B cell (primary cell): ENCODE measurements at regions of chr21 and their contacts with region 1.

Region 1: GRCh38 chr21:37463083-37463801 is 96.7 kb downstream of the DYRK1A start:
- DNase-seq: peak; percentile 68
- ATAC-seq: peak; percentile 72
- H3K4me3 ChIP-seq: no peak overlapping the region
- H3K4me3 Mint-ChIP-seq: peak overlapping the region; percentile 33
- H3K27ac ChIP-seq: no peak overlapping the region
- H3K27ac Mint-ChIP-seq: peak overlapping the region; percentile 69
- H3K4me1 ChIP-seq: peaks cover 52 to 64% of the 10 kb centered on the region in 2 donors
- H3K4me1 Mint-ChIP-seq: peaks cover 86% of the 10 kb centered on the region
- H3K27me3 ChIP-seq: no peaks in the 10 kb centered on the region
- H3K27me3 Mint-ChIP-seq: no peaks in the 10 kb centered on the region
- CTCF ChIP-seq: peak; percentile 66

Region 2: DNA sequence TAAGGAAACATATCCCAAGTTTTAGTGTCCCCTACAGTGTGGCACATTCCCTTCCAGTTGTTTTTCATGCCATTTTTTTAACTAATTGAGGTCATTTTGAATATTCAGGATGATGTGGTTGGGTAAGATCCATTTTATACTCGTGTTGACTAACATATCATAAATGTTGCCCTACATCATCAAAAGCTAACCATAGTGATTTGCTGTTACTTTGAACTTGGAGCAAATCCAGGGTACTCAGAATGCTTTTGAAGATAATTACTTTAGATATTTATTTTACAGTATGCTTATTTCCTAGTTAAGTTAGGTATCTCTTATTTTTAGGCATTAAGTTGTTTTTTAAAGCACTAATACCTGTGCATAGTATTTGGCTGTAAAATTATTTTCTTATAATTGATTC is 38.8 kb before region 1 on chr21:
- CTCF ChIA-PET with region 1: no interaction called
- POLR2A ChIA-PET with region 1: no interaction called
- intact Hi-C with region 1: loop called (anchors 5 kb)
- DNase-seq: no peak
- ATAC-seq: no peak
- H3K4me3 ChIP-seq: no peak overlapping the region
- H3K4me3 Mint-ChIP-seq: no peak overlapping the region
- H3K27ac ChIP-seq: no peak overlapping the region
- H3K27ac Mint-ChIP-seq: no peak overlapping the region
- H3K4me1 ChIP-seq: peaks cover 0 to 4% of the 10 kb centered on the region in 2 donors
- H3K4me1 Mint-ChIP-seq: peaks cover 42% of the 10 kb centered on the region
- H3K27me3 ChIP-seq: no peaks in the 10 kb centered on the region
- H3K27me3 Mint-ChIP-seq: no peaks in the 10 kb centered on the region
- CTCF ChIP-seq: no peak

Region 3: GRCh38 chr21:37435120-37435519 is 28.1 kb before region 1 on chr21:
- CTCF ChIA-PET with region 1: interaction called, 3 read pairs
- POLR2A ChIA-PET with region 1: no interaction called
- intact Hi-C with region 1: loop called (anchors 2 kb)
- DNase-seq: peak; percentile 79
- ATAC-seq: peak; percentile 93
- H3K4me3 ChIP-seq: no peak overlapping the region
- H3K4me3 Mint-ChIP-seq: no peak overlapping the region
- H3K27ac ChIP-seq: no peak overlapping the region
- H3K27ac Mint-ChIP-seq: no peak overlapping the region
- H3K4me1 ChIP-seq: peaks cover 24 to 39% of the 10 kb centered on the region in 2 donors
- H3K4me1 Mint-ChIP-seq: peaks cover 36% of the 10 kb centered on the region
- H3K27me3 ChIP-seq: no peaks in the 10 kb centered on the region
- H3K27me3 Mint-ChIP-seq: no peaks in the 10 kb centered on the region
- CTCF ChIP-seq: no peak

Region 4: GRCh38 chr21:37475186-37475868 is 12.1 kb after region 1 on chr21:
- CTCF ChIA-PET with region 1: interaction called, 9 read pairs
- POLR2A ChIA-PET with region 1: no interaction called
- intact Hi-C with region 1: loop called (anchors 1 kb)
- DNase-seq: peak; percentile 19
- ATAC-seq: peak; percentile 33
- H3K4me3 ChIP-seq: no peak overlapping the region
- H3K4me3 Mint-ChIP-seq: no peak overlapping the region
- H3K27ac ChIP-seq: peak overlapping the region in 1 of 2 donors; percentile 52
- H3K27ac Mint-ChIP-seq: peak overlapping the region; percentile 0
- H3K4me1 ChIP-seq: peaks cover 3 to 14% of the 10 kb centered on the region in 2 donors
- H3K4me1 Mint-ChIP-seq: peaks cover 49% of the 10 kb centered on the region
- H3K27me3 ChIP-seq: no peaks in the 10 kb centered on the region
- H3K27me3 Mint-ChIP-seq: no peaks in the 10 kb centered on the region
- CTCF ChIP-seq: no peak